ENCODE measurements at regions of chr12 and their contacts with region 1.

Region 1: GRCh38 chr12:127125607-127126259 is 1141.2 kb upstream of the TMEM132C start:
- DNase-seq: peak; percentile 57
- H3K4me3 Mint-ChIP-seq: no peak overlapping the region
- H3K27ac Mint-ChIP-seq: peak overlapping the region; percentile 80
- H3K4me1 Mint-ChIP-seq: peaks cover 18% of the 10 kb centered on the region
- H3K27me3 Mint-ChIP-seq: no peaks in the 10 kb centered on the region

Region 2: GRCh38 chr12:126582231-126582630 is 543.5 kb before region 1 on chr12:
- intact Hi-C with region 1: loop called (anchors 10 kb)
- DNase-seq: no peak
- H3K4me3 Mint-ChIP-seq: no peak overlapping the region
- H3K27ac Mint-ChIP-seq: no peak overlapping the region
- H3K4me1 Mint-ChIP-seq: no peaks in the 10 kb centered on the region
- H3K27me3 Mint-ChIP-seq: no peaks in the 10 kb centered on the region

Region 3: DNA sequence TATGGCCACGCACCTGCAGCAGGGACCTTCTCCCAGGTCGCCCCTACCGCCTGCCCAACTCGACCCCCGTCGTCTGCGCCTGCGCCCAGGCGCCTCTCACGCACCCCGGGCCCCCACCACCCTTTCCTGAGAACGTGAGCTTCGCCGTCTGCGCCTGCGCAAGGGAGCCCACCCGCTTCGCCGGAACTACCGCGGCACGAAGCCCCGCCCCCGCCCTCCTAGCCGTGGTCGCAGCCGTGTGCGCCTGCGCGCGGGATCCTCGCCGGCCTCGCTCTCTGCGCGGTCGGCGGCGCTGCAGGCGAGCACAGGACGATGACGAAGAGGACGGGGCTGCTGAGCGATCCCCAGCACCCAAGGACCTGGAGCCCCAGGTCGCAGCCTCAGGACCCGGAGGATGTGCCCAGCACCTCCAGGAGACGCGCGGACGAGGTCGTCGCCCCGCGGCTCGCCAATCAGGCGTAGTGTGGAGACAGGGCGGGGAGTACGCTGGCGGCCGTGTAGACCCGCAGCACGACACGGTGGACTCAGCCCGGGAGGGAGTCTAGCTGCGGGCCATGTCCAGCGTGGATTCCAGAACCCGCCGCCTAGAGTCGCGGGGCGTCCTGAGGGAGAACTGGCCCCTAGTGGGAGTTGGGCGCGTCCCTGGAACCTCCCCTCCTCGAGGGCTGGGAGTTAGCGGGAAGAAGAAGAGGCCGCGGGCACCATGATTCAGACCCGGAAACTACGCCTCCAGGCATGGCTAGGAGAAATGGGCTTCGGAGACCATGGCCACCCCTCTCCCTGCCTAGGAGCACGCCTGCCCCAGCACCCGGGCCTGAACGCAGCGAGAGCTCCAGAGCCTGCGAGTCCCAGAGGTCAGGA is 20.4 kb after region 1 on chr12:
- intact Hi-C with region 1: loop called (anchors 2 kb)
- DNase-seq: peak; percentile 59
- H3K4me3 Mint-ChIP-seq: peak overlapping the region; percentile 82
- H3K27ac Mint-ChIP-seq: peak overlapping the region; percentile 44
- H3K4me1 Mint-ChIP-seq: no peaks in the 10 kb centered on the region
- H3K27me3 Mint-ChIP-seq: peaks cover 7% of the 10 kb centered on the region

Region 4: GRCh38 chr12:127165567-127166392 is 40.0 kb after region 1 on chr12:
- intact Hi-C with region 1: loop called (anchors 1 kb)
- DNase-seq: peak; percentile 77
- H3K4me3 Mint-ChIP-seq: peak overlapping the region; percentile 81
- H3K27ac Mint-ChIP-seq: peak overlapping the region; percentile 53
- H3K4me1 Mint-ChIP-seq: peaks cover 26% of the 10 kb centered on the region
- H3K27me3 Mint-ChIP-seq: peaks cover 15% of the 10 kb centered on the region